OCI-LY7 (cell line): ENCODE measurements at regions of chr3 and their contacts with region 1.

Region 1: GRCh38 chr3:132448216-132448961 is 31.1 kb downstream of the DNAJC13 start:
- DNase-seq: no peak
- H3K4me3 ChIP-seq: no peak overlapping the region
- H3K27ac ChIP-seq: no peak overlapping the region
- H3K4me1 ChIP-seq: no peaks in the 10 kb centered on the region
- CTCF ChIP-seq: no peak

Region 2: GRCh38 chr3:132461544-132461943 is 13.2 kb after region 1 on chr3:
- CTCF ChIA-PET with region 1: interaction called, 3 read pairs
- POLR2A ChIA-PET with region 1: interaction called, 10 read pairs
- intact Hi-C with region 1: no loop called
- DNase-seq: no peak
- H3K4me3 ChIP-seq: no peak overlapping the region
- H3K27ac ChIP-seq: no peak overlapping the region
- H3K4me1 ChIP-seq: no peaks in the 10 kb centered on the region
- CTCF ChIP-seq: no peak